Mammary epithelial cell (primary cell): ENCODE measurements at regions of chr17 and their contacts with region 1.

Region 1: GRCh38 chr17:31274252-31274651 is 22.8 kb downstream of the OMG start:
- DNase-seq: peak; percentile 87
- H3K4me3 ChIP-seq: peak overlapping the region in 1 of 3 experiments; percentile 20
- H3K27ac ChIP-seq: peak overlapping the region; percentile 70
- H3K4me1 ChIP-seq: peaks cover 29% of the 10 kb centered on the region
- H3K27me3 ChIP-seq: no peaks in the 10 kb centered on the region
- CTCF ChIP-seq: no peak

Region 2: DNA sequence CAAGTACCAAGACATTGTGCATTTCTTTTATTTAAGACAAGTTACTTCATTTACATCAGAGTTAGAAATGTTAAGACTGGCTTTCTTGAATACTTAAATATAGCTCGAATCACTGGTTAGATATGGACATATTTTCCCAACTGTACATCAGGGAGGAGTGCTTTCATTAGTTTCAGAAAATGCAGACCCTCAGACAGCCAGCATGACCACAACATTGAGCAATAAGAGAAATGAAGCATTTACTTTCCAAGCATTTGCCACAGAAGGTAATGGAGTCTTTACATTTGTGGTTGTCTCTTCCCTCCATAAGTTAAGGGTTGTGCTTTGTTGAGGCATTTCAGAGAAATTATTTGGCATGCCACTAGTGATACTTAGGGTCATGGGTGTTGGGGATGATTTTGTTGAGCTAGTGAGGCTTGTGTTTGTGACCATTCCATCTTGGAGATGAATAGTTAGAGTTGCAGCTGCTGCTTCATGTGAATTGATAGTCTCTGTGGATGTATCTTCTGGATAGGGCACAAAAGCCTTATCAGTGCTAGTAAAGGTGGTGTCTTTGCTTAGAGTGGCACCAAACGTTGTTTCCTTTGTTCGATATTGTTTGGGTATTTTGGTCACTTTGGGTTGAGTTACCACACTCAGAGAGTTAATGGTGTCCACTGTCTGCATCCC is 20.7 kb after region 1 on chr17:
- CTCF ChIA-PET with region 1: no interaction called
- dilution Hi-C with region 1: no loop called
- in situ Hi-C with region 1: no loop called
- intact Hi-C with region 1: no loop called
- DNase-seq: no peak
- H3K4me3 ChIP-seq: no peak overlapping the region
- H3K27ac ChIP-seq: no peak overlapping the region
- H3K4me1 ChIP-seq: no peaks in the 10 kb centered on the region
- H3K27me3 ChIP-seq: no peaks in the 10 kb centered on the region
- CTCF ChIP-seq: no peak

Region 3: GRCh38 chr17:31310260-31310659 is 36.0 kb after region 1 on chr17:
- CTCF ChIA-PET with region 1: no interaction called
- dilution Hi-C with region 1: no loop called
- in situ Hi-C with region 1: no loop called
- intact Hi-C with region 1: loop called (anchors 2 kb)
- DNase-seq: no peak
- H3K4me3 ChIP-seq: no peak overlapping the region
- H3K27ac ChIP-seq: no peak overlapping the region
- H3K4me1 ChIP-seq: peaks cover 5% of the 10 kb centered on the region
- H3K27me3 ChIP-seq: no peaks in the 10 kb centered on the region
- CTCF ChIP-seq: no peak